ENCODE measurements at regions of chr1 and their contacts with region 1.

Region 1: DNA sequence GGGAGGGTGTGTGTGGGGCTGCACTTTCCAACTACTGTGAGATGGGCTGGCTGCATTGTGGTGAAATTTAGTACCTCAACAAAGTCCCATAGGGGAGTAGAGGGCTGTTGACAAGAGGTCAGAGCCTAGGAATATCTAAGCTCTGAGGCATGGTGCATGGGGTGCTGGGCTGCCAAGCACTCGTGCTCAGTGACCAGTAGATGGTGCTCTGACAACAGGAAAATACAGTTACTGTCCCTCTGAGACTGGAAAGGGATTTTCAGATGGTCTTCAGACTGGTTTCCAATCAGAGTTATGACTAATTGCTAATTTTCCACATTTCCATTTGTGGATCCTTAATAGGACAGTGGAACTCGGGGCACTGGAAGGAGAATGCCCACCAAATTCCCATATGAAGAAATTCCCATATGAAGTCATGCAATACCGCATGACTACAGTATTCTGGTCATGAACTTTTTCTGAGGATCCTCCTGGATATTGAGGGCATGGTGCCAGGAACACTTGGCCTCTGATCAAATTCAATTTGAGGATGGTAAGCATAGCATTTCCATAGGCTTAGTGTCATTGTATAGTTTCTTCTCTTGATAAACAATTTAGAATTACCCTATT is 4.1 kb upstream of the CACNA1E start:
- DNase-seq: peak in 2 of 3 donors; percentile 47 to 59
- ATAC-seq: peak; percentile 91 to 97 (median 92)
- H3K4me3 ChIP-seq: no peak overlapping the region
- H3K27ac ChIP-seq: no peak overlapping the region
- H3K4me1 ChIP-seq: no peaks in the 10 kb centered on the region
- H3K27me3 ChIP-seq: peaks cover 5% of the 10 kb centered on the region in 2 donors
- CTCF ChIP-seq: peak; percentile 83 to 88 (median 85)
- POLR2A ChIP-seq: no peak

Region 2: DNA sequence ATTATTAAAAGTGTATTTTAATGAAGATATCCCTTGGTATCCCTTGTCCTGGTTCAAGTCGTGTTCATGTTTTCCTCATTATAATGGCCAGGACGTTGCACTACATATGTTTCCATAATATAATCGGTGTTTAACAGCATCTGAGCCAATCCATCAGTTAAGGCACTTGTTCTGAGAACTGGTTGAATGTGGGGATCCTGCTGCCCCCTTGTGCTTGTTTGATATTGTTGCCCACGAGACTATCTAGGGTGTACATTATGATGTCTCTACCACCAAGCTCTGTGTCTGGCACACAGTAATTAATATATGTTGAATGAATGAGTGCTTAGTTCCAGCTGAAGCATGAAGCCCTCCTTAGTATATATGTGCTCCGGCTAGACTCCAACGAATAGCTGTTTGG is 197.0 kb after region 1 on chr1:
- intact Hi-C with region 1: loop called (anchors 5 kb)
- DNase-seq: peak in 1 of 3 donors; percentile 52
- ATAC-seq: peak; percentile 79 to 91 (median 83)
- H3K4me3 ChIP-seq: no peak overlapping the region
- H3K27ac ChIP-seq: no peak overlapping the region
- H3K4me1 ChIP-seq: no peaks in the 10 kb centered on the region
- H3K27me3 ChIP-seq: no peaks in the 10 kb centered on the region
- CTCF ChIP-seq: peak; percentile 50 to 59 (median 54)
- POLR2A ChIP-seq: no peak

Region 3: GRCh38 chr1:181947441-181947840 is 468.2 kb after region 1 on chr1:
- intact Hi-C with region 1: loop called in 1 of 2 experiments (anchors 10 kb)
- DNase-seq: no peak
- ATAC-seq: no peak
- H3K4me3 ChIP-seq: no peak overlapping the region
- H3K27ac ChIP-seq: no peak overlapping the region
- H3K4me1 ChIP-seq: no peaks in the 10 kb centered on the region
- H3K27me3 ChIP-seq: no peaks in the 10 kb centered on the region
- CTCF ChIP-seq: no peak
- POLR2A ChIP-seq: no peak